ENCODE measurements at regions of chr3 and their contacts with region 1.

Region 1: GRCh38 chr3:71710906-71711494 is 14.2 kb downstream of the EIF4E3 start:
- DNase-seq: no peak
- H3K4me3 ChIP-seq: no peak overlapping the region
- H3K27ac ChIP-seq: peak overlapping the region in 16 of 59 donors; percentile 4 to 94 (median 40)
- H3K27me3 ChIP-seq: no peaks in the 10 kb centered on the region
- CTCF ChIP-seq: peak; percentile 32 to 86 (median 72)

Region 2: DNA sequence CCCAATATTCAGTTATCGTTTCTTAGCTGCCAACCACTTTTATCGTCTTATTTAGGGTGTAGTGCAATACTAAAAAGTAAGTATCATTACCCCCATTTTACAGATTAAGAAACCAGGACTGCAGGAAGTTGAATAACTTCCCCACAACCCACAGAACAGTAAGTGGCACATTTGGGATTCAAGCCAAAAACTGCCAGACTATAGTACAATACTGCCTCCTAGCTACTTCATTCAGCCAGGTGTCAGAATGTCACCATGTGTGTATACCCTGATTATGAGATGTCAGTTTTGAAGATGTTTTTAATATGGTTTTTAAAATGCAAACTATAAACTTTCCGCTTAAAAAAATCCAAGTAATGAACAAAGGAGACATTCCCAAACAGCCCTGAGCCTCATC is 148.1 kb after region 1 on chr3:
- intact Hi-C with region 1: loop called in 1 of 2 experiments (anchors 5 kb)
- DNase-seq: no peak
- H3K4me3 ChIP-seq: no peak overlapping the region
- H3K27ac ChIP-seq: no peak overlapping the region
- H3K27me3 ChIP-seq: peaks cover 0 to 4% (median 0%) of the 10 kb centered on the region in 45 donors
- CTCF ChIP-seq: peak in 53 of 56 donors; percentile 18 to 79 (median 52)

Region 3: GRCh38 chr3:72836923-72837322 is 1125.9 kb after region 1 on chr3:
- intact Hi-C with region 1: loop called in 1 of 2 experiments (anchors 10 kb)
- DNase-seq: peak; percentile 47 to 80 (median 73)
- H3K4me3 ChIP-seq: no peak overlapping the region
- H3K27ac ChIP-seq: peak overlapping the region in 4 of 59 donors; percentile 8 to 26 (median 14)
- H3K27me3 ChIP-seq: no peaks in the 10 kb centered on the region
- CTCF ChIP-seq: peak in 23 of 56 donors; percentile 6 to 44 (median 22)